MCF 10A (cell line): ENCODE measurements at regions of chr20 and their contacts with region 1.

Region 1: GRCh38 chr20:38472513-38473372 is at the start of gene RALGAPB:
- DNase-seq: peak; percentile 99
- H3K4me3 Mint-ChIP-seq: peak within 1 kb of the TSS; percentile 78
- H3K27ac Mint-ChIP-seq: peak within 1 kb of the TSS; percentile 81
- H3K4me1 Mint-ChIP-seq: peaks cover 23% of the 10 kb centered on the region
- H3K27me3 Mint-ChIP-seq: no peaks in the 10 kb centered on the region
- CTCF ChIP-seq: peak; percentile 46
- total RNA-seq, gene RALGAPB: 33.8 and 37.3 TPM in 2 replicates

Region 2: DNA sequence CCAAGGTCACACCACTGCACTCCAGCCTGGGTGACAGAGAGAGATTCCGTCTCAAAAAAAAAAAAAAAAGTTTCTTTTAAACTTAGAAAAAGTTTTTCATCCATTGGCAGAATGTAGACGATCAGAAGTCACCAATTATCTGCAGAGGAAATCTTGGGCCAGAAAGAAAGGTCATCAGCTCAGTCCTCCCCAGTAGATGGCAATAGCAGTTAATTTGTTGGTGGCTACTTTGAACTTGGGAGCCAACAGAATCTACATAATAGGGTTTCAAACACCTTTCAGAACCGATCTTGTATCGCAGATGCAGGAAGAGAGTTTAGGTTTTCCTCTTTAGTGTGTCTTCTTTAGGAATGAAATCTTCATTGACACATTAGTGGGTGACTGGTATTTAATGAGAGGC is 84.8 kb before region 1 on chr20:
- CTCF ChIA-PET with region 1: no interaction called
- POLR2A ChIA-PET with region 1: no interaction called
- intact Hi-C with region 1: no loop called
- DNase-seq: peak; percentile 7
- H3K4me3 Mint-ChIP-seq: no peak overlapping the region
- H3K27ac Mint-ChIP-seq: no peak overlapping the region
- H3K4me1 Mint-ChIP-seq: no peaks in the 10 kb centered on the region
- H3K27me3 Mint-ChIP-seq: peaks cover 13% of the 10 kb centered on the region
- CTCF ChIP-seq: no peak

Region 3: DNA sequence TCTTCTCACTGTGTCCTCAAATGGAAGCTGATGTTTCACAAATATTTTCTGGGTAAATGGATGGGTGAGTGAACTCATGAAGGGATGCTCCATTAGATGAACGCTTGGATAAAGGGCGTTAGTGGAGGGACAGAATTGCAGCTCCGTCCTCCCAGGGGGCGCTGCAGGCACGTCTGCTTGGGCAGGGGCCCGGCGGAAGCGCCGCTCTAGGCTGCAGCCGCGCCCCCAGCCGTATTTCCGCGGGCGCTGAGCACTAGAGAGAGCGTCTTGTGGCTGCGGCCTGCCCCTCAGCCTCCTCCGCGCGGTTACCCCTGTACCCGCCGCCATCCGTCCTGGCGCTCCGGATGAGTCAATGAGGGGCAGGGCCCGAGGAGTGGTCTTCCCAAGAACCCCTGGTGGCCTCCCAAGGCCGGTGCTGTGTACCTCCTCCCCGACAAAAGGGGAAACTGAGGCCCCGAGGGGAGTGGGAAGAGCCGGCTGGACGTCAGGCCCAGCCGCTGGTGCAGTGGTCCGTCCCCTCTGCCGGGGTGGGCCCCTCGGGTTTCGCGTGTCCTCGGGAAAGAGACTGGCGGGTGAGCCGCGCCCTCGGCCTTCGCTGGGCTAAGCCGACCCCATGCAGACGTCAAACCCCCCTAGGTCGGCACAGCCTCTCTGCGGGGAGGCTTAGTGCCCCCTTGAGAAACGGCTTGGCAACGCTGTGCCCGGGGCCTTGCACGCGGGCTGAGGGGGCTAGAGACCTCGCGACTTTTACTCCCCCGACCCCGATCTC is 26.1 kb before region 1 on chr20:
- CTCF ChIA-PET with region 1: interaction called, 55 read pairs
- POLR2A ChIA-PET with region 1: interaction called, 91 read pairs
- intact Hi-C with region 1: loop called (anchors 2 kb)
- DNase-seq: peak; percentile 85
- H3K4me3 Mint-ChIP-seq: peak overlapping the region; percentile 77
- H3K27ac Mint-ChIP-seq: peak overlapping the region; percentile 87
- H3K4me1 Mint-ChIP-seq: peaks cover 7% of the 10 kb centered on the region
- H3K27me3 Mint-ChIP-seq: peaks cover 12% of the 10 kb centered on the region
- CTCF ChIP-seq: peak; percentile 95

Region 4: GRCh38 chr20:38460040-38460623 is 12.6 kb before region 1 on chr20:
- CTCF ChIA-PET with region 1: interaction called, 14 read pairs
- POLR2A ChIA-PET with region 1: interaction called, 19 read pairs
- intact Hi-C with region 1: no loop called
- DNase-seq: peak; percentile 95
- H3K4me3 Mint-ChIP-seq: peak overlapping the region; percentile 52
- H3K27ac Mint-ChIP-seq: peak overlapping the region; percentile 66
- H3K4me1 Mint-ChIP-seq: peaks cover 6% of the 10 kb centered on the region
- H3K27me3 Mint-ChIP-seq: no peaks in the 10 kb centered on the region
- CTCF ChIP-seq: no peak

Region 5: GRCh38 chr20:38498909-38499308 is 26.2 kb after region 1 on chr20:
- CTCF ChIA-PET with region 1: interaction called, 3 read pairs
- POLR2A ChIA-PET with region 1: interaction called, 85 read pairs
- intact Hi-C with region 1: no loop called
- DNase-seq: no peak
- H3K4me3 Mint-ChIP-seq: no peak overlapping the region
- H3K27ac Mint-ChIP-seq: no peak overlapping the region
- H3K4me1 Mint-ChIP-seq: peaks cover 6% of the 10 kb centered on the region
- H3K27me3 Mint-ChIP-seq: no peaks in the 10 kb centered on the region
- CTCF ChIP-seq: no peak

Region 6: DNA sequence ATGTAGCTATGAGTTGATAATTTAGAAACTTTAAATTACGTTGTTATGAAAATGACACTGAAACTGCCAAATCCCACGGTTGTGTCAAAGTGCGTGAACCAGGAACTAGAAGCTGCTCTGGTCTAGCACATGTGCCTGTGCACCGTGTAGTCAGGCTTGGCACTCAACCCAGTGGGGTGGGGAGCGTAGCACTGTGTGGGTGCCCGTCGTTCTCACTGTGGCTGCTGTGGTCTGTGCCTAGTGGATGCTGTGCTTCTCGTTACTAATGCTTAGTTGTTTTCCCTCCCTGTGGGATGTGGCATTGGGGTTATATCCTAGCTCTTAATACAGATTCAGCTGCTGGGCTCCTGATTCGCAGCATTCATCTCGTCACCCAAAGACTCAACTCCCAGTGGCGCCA is 62.0 kb after region 1 on chr20:
- CTCF ChIA-PET with region 1: interaction called, 12 read pairs
- POLR2A ChIA-PET with region 1: interaction called, 10 read pairs
- intact Hi-C with region 1: no loop called
- DNase-seq: no peak
- H3K4me3 Mint-ChIP-seq: no peak overlapping the region
- H3K27ac Mint-ChIP-seq: no peak overlapping the region
- H3K4me1 Mint-ChIP-seq: peaks cover 12% of the 10 kb centered on the region
- H3K27me3 Mint-ChIP-seq: no peaks in the 10 kb centered on the region
- CTCF ChIP-seq: no peak

Region 7: DNA sequence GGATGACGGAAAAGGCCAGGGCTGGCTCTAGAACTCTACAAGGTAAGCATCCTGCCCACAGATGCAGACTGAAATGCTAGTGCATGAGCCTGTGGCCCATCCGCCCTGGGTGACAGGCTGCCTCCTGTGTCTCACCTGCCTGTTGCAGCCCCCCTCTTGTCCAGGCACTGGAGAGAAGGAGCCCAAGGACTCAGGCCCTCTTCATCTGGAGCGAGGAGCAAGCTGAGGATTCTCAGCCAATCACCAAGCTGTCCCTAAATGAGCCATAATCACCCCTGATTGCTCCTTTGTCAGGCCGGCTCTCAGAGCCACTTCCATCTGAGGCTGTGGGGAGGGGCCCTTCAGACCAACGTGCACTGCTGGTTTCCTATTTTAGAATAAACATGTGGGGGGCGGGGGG is 241.6 kb after region 1 on chr20:
- CTCF ChIA-PET with region 1: no interaction called
- POLR2A ChIA-PET with region 1: no interaction called
- intact Hi-C with region 1: no loop called
- DNase-seq: no peak
- H3K4me3 Mint-ChIP-seq: no peak overlapping the region
- H3K27ac Mint-ChIP-seq: no peak overlapping the region
- H3K4me1 Mint-ChIP-seq: no peaks in the 10 kb centered on the region
- H3K27me3 Mint-ChIP-seq: peaks cover 51% of the 10 kb centered on the region
- CTCF ChIP-seq: no peak